Dorsolateral prefrontal cortex (tissue), 120 donors: ENCODE measurements at regions of chr2 and their contacts with region 1.

Region 1: DNA sequence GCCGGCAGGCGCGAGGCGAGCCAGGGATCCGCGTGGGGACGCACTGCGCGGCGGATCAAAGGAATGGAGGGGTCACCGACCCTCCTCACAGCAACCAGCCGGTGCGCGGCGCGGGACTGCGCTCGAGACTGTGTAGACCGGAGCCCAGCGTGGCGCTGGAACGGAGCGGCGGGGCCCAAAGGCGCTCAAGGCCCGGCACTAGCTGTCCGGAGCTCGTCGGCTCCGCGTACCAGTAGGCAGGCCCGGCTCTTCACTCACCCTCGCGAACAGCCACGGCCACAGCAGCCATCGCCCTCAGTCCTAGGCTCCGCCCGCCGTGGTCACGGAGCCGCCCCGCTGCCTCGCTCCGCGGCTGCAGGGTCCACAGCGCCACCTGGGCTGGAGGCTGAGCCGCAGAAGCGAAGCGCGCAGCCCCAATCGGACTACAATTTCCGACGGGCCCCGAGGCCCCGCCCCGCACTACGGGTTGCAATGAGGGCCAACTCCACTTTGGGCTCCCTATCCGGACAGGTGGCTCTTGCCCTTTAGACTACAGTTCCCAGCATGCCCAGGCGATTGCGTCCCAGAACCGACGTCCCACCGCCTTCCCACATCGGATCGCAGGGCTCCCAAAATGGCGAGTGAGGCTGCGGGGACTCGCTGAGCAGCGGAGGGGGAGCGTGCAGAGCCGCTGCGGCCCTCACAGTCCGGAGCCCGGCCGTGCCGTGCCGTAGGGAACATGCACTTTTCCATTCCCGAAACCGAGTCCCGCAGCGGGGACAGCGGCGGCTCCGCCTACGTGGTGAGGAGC is at the starts of genes EIF2B4 and SNX17:
- DNase-seq: peak; percentile 98 to 100 (median 99)
- H3K4me3 ChIP-seq: peak within 1 kb of the TSS; percentile 61 to 100 (median 97)
- H3K27ac ChIP-seq: peak within 1 kb of the TSS; percentile 52 to 97 (median 90)
- H3K27me3 ChIP-seq: no peaks in the 10 kb centered on the region
- CTCF ChIP-seq: peak; percentile 64 to 96 (median 85)
- total RNA-seq, gene EIF2B4: 24.0 to 55.0 (median 38.2) TPM
- total RNA-seq, gene SNX17: 62.9 to 106 (median 87.8) TPM

Region 2: GRCh38 chr2:27133905-27134780 is 236.1 kb before region 1 on chr2 and contains the start of gene PREB:
- intact Hi-C with region 1: loop called in 1 of 2 experiments (anchors 10 kb)
- DNase-seq: peak; percentile 88 to 99 (median 96)
- H3K4me3 ChIP-seq: peak within 1 kb of the TSS; percentile 45 to 100 (median 96)
- H3K27ac ChIP-seq: peak within 1 kb of the TSS in 57 of 59 donors; percentile 36 to 95 (median 87)
- H3K27me3 ChIP-seq: no peaks in the 10 kb centered on the region
- CTCF ChIP-seq: peak in 32 of 56 donors; percentile 3 to 55 (median 30)
- total RNA-seq, gene PREB: 25.2 to 52.0 (median 34.9) TPM

Region 3: DNA sequence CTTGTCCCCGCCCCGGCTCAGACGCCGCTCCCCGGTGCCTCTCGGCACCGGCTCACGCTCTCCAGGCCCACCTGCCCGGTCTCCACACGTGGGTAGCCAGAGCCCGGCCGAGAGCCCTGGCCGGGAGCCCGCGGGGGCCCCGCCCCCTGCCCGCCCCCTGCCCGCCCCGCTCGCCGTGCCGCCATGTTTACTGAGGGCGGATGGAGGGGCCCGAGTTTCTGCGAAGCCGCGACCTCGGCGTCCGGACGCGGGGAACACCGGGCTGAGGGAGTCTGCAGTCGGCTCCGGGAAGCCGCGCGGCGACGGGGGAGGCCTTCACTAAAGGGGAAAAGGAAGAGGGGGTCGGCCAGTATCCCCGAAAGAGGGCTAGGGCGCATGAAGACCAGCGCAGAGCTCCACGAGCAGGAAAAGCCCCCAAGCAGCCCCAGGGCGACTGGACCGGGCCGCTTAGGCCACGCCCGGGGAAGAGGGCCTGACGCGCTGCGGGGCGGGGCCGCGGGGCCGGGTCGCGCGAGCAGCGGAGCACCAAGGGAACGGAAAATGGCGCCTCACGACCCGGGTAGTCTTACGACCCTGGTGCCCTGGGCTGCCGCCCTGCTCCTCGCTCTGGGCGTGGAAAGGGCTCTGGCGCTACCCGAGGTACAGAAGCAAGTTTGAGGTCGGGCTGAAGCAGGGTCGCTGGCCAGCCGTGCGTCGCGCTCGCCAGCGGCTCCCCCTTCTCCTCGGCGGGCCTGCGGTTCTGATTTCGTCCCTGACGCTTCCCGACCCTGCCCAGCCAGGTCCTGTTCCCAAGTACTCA is 158.2 kb before region 1 on chr2 and contains the starts of genes ATRAID and SLC5A6:
- intact Hi-C with region 1: loop called in 1 of 2 experiments (anchors 5 kb)
- DNase-seq: peak; percentile 71 to 92 (median 86)
- H3K4me3 ChIP-seq: peak within 1 kb of the TSS; percentile 64 to 100 (median 88)
- H3K27ac ChIP-seq: peak within 1 kb of the TSS; percentile 76 to 99 (median 96)
- H3K27me3 ChIP-seq: no peaks in the 10 kb centered on the region
- CTCF ChIP-seq: peak in 12 of 56 donors; percentile 1 to 51 (median 16)
- total RNA-seq, gene ATRAID: 28.0 to 68.1 (median 45.4) TPM
- total RNA-seq, gene SLC5A6: 21.6 to 107 (median 39.0) TPM

Region 4: GRCh38 chr2:27356382-27357181 is 13.6 kb before region 1 on chr2 and contains the start of gene GTF3C2:
- intact Hi-C with region 1: loop called (anchors 1 kb)
- DNase-seq: peak; percentile 93 to 98 (median 95)
- H3K4me3 ChIP-seq: peak within 1 kb of the TSS; percentile 64 to 100 (median 95)
- H3K27ac ChIP-seq: peak within 1 kb of the TSS; percentile 46 to 97 (median 90)
- H3K27me3 ChIP-seq: no peaks in the 10 kb centered on the region
- CTCF ChIP-seq: peak in 40 of 56 donors; percentile 5 to 61 (median 30)
- total RNA-seq, gene GTF3C2: 37.3 to 76.0 (median 50.6) TPM

Region 5: DNA sequence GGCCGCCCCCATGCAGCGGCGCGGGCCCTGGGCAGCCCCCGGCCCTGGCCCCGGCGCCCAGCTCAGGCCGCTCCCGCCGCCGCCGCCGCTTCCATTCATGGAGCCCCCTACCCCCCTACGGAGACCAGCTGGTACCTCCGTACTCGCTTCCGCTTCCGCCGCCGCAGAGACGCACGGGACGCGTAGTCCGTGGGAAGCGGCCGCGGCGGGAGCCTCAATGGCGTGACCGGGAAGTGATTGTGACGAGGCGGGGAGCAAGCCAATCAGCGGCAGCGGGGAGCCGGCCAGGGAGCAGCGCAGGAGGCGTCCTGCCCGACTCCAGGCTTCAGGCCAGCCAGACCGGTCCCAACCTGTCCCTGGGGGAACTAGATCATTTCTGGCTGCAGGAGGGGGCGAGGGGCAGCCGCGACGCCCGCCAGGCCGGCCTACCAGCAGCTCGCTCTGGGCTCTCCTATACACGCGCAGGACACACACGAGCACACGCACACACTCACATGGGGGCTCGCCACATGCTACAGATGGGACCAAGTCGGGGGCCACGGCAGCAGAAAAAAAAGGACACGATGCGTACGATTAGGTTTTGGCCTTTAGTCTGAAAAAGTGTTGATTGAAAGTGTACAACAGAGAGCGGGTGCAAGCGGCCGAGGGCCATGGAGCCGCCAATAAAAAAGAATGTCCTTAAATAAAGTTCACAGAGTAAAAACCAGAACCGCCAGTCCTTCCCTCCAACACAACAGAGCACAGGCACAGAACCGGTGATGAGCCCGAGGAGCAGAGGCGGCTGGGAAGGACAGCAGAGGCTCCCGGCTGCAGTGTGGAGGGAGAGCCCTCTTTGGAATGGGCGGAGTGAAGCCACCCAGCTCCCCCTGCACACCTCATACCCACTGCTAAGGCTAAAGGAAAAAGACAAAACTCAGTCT is 10.7 kb after region 1 on chr2 and contains the start of gene ZNF513:
- intact Hi-C with region 1: loop called (anchors 1 kb)
- DNase-seq: peak; percentile 96 to 99 (median 98)
- H3K4me3 ChIP-seq: peak within 1 kb of the TSS; percentile 51 to 99 (median 74)
- H3K27ac ChIP-seq: peak within 1 kb of the TSS in 58 of 59 donors; percentile 58 to 97 (median 91)
- H3K27me3 ChIP-seq: no peaks in the 10 kb centered on the region
- CTCF ChIP-seq: peak in 15 of 56 donors; percentile 6 to 51 (median 13)
- total RNA-seq, gene ZNF513: 13.9 to 41.1 (median 20.6) TPM

Region 6: GRCh38 chr2:27409321-27410073 is 39.3 kb after region 1 on chr2 and contains the start of gene PPM1G:
- intact Hi-C with region 1: loop called in 1 of 2 experiments (anchors 5 kb)
- DNase-seq: peak; percentile 91 to 98 (median 94)
- H3K4me3 ChIP-seq: peak within 1 kb of the TSS; percentile 70 to 100 (median 96)
- H3K27ac ChIP-seq: peak within 1 kb of the TSS; percentile 40 to 93 (median 82)
- H3K27me3 ChIP-seq: no peaks in the 10 kb centered on the region
- CTCF ChIP-seq: peak in 38 of 56 donors; percentile 1 to 62 (median 28)
- total RNA-seq, gene PPM1G: 25.7 to 47.4 (median 35.7) TPM

Region 7: GRCh38 chr2:27428213-27428977 is 58.2 kb after region 1 on chr2 and contains the start of gene NRBP1:
- intact Hi-C with region 1: loop called (anchors 1 kb)
- DNase-seq: peak; percentile 83 to 97 (median 93)
- H3K4me3 ChIP-seq: peak within 1 kb of the TSS; percentile 67 to 100 (median 94)
- H3K27ac ChIP-seq: peak within 1 kb of the TSS; percentile 81 to 99 (median 96)
- H3K27me3 ChIP-seq: no peaks in the 10 kb centered on the region
- CTCF ChIP-seq: peak in 33 of 56 donors; percentile 2 to 48 (median 27)
- total RNA-seq, gene NRBP1: 61.5 to 97.0 (median 80.4) TPM

Region 8: GRCh38 chr2:27582695-27583389 is 212.6 kb after region 1 on chr2 and contains the start of gene ZNF512:
- intact Hi-C with region 1: no loop called
- DNase-seq: peak; percentile 71 to 91 (median 84)
- H3K4me3 ChIP-seq: peak within 1 kb of the TSS; percentile 50 to 94 (median 77)
- H3K27ac ChIP-seq: peak within 1 kb of the TSS in 51 of 59 donors; percentile 14 to 83 (median 65)
- H3K27me3 ChIP-seq: no peaks in the 10 kb centered on the region
- CTCF ChIP-seq: peak in 14 of 56 donors; percentile 7 to 37 (median 16)
- total RNA-seq, gene ZNF512: 30.4 to 63.1 (median 44.4) TPM